ENCODE measurements at regions of chr17 and their contacts with region 1.

Region 1: DNA sequence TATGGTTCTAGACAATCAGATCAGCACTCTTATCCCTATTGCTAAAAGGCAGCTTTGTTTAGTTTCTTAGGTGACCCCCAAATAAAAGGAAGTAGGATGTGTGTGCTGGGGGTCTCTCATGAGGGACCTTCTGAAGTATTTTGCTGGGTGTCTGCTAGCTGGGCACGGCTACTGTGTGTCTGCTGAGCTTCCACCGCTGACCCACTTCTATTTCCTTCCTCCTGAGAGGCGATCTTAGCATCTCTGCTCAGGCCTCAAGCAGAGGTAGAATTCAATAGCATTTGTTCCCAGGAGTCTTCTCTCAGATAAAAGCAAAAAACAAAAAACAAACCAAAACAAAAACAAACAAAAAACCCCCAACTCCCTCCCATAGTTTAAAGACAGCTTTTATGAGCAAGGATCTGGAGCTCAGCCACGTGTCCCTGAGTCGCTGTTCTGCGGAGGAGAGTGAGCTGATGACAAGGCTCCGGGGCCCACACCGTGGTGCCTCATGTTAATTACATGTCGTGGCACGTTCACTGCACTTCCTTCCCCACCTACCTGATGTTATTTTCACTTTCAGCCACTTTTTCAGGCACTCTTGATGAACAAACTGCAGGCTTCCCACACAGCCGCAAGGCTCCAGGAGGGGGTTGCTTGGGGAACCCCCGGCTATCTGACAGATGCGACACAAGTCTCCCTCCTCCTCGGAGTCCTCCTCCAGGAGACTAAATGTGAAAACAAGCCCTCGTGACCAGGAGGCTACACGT is 83.5 kb downstream of the MARCHF10 start:
- DNase-seq: peak; percentile 46
- ATAC-seq: peak; percentile 92
- H3K4me3 Mint-ChIP-seq: peak overlapping the region; percentile 75
- H3K27ac Mint-ChIP-seq: peak overlapping the region; percentile 91
- H3K4me1 Mint-ChIP-seq: peaks cover 60% of the 10 kb centered on the region
- H3K27me3 Mint-ChIP-seq: peaks cover 3% of the 10 kb centered on the region
- CTCF ChIP-seq: no peak

Region 2: DNA sequence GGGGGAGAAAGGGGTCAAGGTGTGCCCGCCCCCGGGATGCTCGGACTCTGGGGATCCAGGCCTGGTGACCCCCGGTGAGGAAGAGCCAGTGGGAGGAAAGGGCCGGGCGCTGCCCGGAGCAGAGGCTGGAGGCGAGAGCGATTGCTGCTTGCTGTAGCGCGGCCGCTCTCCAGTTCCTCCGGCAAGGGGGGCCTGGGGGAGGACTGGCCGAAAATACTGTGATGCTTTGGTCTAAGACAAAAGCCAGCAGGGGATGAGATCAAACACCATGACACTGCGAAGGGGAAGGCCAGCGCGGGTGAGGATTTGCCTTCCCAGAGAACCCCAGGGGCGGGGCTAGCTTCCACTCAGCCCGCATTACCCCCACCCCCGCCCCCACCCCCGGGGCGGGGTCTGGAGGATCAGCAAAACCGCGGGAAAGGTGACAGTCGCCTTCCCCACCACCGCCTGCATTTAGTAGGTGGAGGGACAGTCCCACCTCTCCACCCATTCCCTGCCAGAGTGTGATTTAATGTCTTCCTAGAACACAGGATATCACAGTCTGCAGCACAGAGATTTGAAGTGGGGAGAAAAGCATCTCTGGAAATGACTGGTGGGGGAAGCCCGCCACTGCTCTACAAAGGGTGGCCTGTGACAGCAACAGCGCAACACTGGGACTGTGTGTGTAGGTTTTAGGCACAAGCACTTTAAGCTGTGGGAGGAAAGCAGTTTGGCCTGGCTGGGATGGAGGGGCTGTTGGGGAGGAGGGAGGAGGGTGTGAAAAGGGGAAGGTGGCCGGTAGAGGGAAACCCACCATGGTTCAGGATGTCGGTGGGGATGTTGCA is 71.4 kb before region 1 on chr17:
- CTCF ChIA-PET with region 1: no interaction called
- POLR2A ChIA-PET with region 1: no interaction called
- intact Hi-C with region 1: loop called (anchors 1 kb)
- DNase-seq: peak; percentile 51
- ATAC-seq: peak; percentile 85
- H3K4me3 Mint-ChIP-seq: peak overlapping the region; percentile 87
- H3K27ac Mint-ChIP-seq: peak overlapping the region; percentile 71
- H3K4me1 Mint-ChIP-seq: peaks cover 23% of the 10 kb centered on the region
- H3K27me3 Mint-ChIP-seq: no peaks in the 10 kb centered on the region
- CTCF ChIP-seq: no peak

Measured in activated B cell treated with CpG ODN at 0.5 μM for 24 hours (primary cell).